Aorta (tissue), 5 donors: ENCODE measurements at regions of chr5 and their contacts with region 1.

Region 1: GRCh38 chr5:78537821-78538220 is 110.8 kb downstream of the LHFPL2 start:
- DNase-seq: no peak
- ATAC-seq: no peak
- H3K4me3 ChIP-seq: no peak overlapping the region
- H3K27ac ChIP-seq: no peak overlapping the region
- H3K4me1 ChIP-seq: no peaks in the 10 kb centered on the region
- H3K27me3 ChIP-seq: no peaks in the 10 kb centered on the region

Region 2: GRCh38 chr5:78486218-78486617 is 51.6 kb before region 1 on chr5:
- intact Hi-C with region 1: loop called in 1 of 2 experiments (anchors 5 kb)
- DNase-seq: no peak
- ATAC-seq: no peak
- H3K4me3 ChIP-seq: no peak overlapping the region
- H3K27ac ChIP-seq: no peak overlapping the region
- H3K4me1 ChIP-seq: peaks cover 0 to 12% of the 10 kb centered on the region in 2 donors
- H3K27me3 ChIP-seq: no peaks in the 10 kb centered on the region

Region 3: GRCh38 chr5:78648359-78649210 is 110.8 kb after region 1 on chr5 and contains the start of gene LHFPL2:
- intact Hi-C with region 1: loop called in 1 of 2 experiments (anchors 5 kb)
- DNase-seq: peak; percentile 86 to 93
- ATAC-seq: peak; percentile 92
- H3K4me3 ChIP-seq: peak within 1 kb of the TSS; percentile 57 to 65
- H3K27ac ChIP-seq: peak within 1 kb of the TSS; percentile 66 to 99
- H3K4me1 ChIP-seq: peaks cover 0 to 3% of the 10 kb centered on the region in 2 donors
- H3K27me3 ChIP-seq: no peaks in the 10 kb centered on the region
- total RNA-seq, gene LHFPL2: 38.6 to 43.1 TPM

Region 4: GRCh38 chr5:78899922-78900362 is 362.1 kb after region 1 on chr5:
- intact Hi-C with region 1: loop called in 1 of 2 experiments (anchors 10 kb)
- DNase-seq: no peak
- ATAC-seq: no peak
- H3K4me3 ChIP-seq: no peak overlapping the region
- H3K27ac ChIP-seq: no peak overlapping the region
- H3K4me1 ChIP-seq: no peaks in the 10 kb centered on the region
- H3K27me3 ChIP-seq: no peaks in the 10 kb centered on the region